HepG2 (cell line): ENCODE measurements at regions of chr12 and their contacts with region 1.

Region 1: DNA sequence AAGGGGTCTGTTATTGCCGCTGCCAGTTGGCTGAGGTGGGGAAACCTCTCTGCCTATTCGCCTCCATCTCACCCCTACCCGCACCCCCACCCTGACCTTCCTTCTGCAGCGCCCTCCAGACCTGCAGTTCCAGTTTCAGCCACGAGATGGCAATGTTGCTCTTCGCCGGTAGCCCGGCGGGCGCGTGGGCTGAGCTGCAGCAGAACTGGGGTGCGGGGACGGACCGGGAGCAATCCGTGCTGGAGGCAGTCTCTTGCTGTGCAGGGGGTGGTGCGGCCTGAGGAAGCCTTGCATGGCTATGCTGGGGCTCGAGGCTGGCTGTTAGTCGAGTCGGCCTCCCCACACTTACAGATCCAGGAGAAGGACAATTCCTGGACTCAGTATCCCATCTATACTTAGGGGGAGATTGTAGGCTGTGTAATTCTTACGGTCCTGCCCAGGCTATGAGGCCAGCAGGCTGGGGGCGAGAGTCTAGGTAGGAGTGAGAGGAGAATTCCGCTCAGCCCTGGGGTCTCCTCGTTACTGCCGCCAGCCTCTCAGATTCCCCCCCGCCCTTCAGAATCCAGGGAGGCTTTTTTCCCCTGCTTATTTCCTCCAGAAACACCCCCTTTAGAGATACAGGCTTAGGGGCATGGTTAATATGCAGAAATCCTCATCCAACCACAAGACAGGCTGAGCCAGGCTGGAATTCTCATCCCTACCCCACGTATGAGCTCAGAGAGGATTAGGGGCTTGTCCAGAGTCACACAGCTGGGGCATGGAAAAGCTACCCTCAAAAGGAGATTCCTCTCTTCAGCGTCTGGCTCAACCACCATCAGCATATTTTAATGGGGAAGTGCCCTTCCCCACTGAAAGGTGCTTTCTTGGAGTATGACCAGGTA is 118.2 kb downstream of the AACS start:
- DNase-seq: peak; percentile 39
- ATAC-seq: peak; percentile 82
- H3K4me3 ChIP-seq: no peak overlapping the region
- H3K27ac ChIP-seq: no peak overlapping the region
- H3K4me1 ChIP-seq: no peaks in the 10 kb centered on the region
- H3K27me3 ChIP-seq: peaks cover 10 to 42% of the 10 kb centered on the region in 2 experiments
- CTCF ChIP-seq: peak; percentile 99
- EP300 ChIP-seq: no peak
- POLR2A ChIP-seq: no peak
- RAD21 ChIP-seq: peak; percentile 93

Region 2: GRCh38 chr12:125203145-125203765 is 19.8 kb after region 1 on chr12:
- CTCF ChIA-PET with region 1: interaction called, 7 read pairs
- POLR2A ChIA-PET with region 1: interaction called, 3 read pairs
- in situ Hi-C with region 1: no loop called
- intact Hi-C with region 1: loop called (anchors 1 kb)
- DNase-seq: peak; percentile 9
- ATAC-seq: peak; percentile 72
- H3K4me3 ChIP-seq: no peak overlapping the region
- H3K27ac ChIP-seq: no peak overlapping the region
- H3K4me1 ChIP-seq: no peaks in the 10 kb centered on the region
- H3K27me3 ChIP-seq: peaks cover 1 to 21% of the 10 kb centered on the region in 2 experiments; a peak in 4 of 5 replicates
- CTCF ChIP-seq: peak; percentile 49
- EP300 ChIP-seq: no peak
- POLR2A ChIP-seq: no peak
- RAD21 ChIP-seq: no peak

Region 3: DNA sequence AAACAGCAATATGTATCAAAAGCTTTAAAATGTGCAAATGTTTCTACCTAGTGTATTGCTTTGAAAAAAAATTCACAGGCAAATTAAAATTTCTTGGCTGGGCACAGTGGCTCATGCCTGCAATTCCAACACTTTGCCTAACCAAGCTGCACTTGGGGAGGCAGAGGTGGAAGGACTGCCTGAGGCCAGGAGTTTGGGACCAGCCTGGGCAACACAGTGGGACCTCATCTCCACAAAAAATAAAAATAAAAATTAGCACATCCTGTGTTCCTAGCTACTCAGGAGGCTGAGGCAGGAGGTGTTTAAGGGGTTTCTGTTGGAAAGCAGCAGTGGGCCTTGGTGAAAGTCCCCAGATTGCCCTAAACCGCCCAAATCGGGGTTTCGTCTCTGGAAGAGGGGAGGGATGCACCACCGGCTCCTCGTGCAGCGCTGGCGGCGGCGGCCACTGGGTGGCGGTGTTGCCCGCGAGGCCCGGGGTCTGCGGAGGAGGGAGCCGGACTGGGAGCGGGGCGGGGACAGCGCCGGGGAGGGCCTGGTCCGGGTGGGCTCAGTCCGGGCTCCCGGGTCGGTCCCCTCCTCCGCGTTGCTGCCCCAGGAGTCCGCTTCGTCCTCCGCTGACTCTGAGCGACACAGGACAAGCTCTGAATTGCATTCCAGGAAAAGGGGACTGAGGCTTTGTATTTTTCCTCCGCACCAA is 147.4 kb after region 1 on chr12:
- CTCF ChIA-PET with region 1: no interaction called
- POLR2A ChIA-PET with region 1: no interaction called
- in situ Hi-C with region 1: no loop called
- intact Hi-C with region 1: loop called (anchors 1 kb)
- DNase-seq: peak; percentile 5
- ATAC-seq: peak; percentile 99
- H3K4me3 ChIP-seq: peak overlapping the region in 2 of 3 experiments; percentile 10 to 63; a peak in 2 of 6 replicates
- H3K27ac ChIP-seq: no peak overlapping the region
- H3K4me1 ChIP-seq: no peaks in the 10 kb centered on the region
- H3K27me3 ChIP-seq: peaks cover 2 to 11% of the 10 kb centered on the region in 2 experiments; a peak in 2 of 5 replicates
- CTCF ChIP-seq: peak; percentile 93
- EP300 ChIP-seq: no peak
- POLR2A ChIP-seq: no peak
- RAD21 ChIP-seq: peak; percentile 92

Region 4: DNA sequence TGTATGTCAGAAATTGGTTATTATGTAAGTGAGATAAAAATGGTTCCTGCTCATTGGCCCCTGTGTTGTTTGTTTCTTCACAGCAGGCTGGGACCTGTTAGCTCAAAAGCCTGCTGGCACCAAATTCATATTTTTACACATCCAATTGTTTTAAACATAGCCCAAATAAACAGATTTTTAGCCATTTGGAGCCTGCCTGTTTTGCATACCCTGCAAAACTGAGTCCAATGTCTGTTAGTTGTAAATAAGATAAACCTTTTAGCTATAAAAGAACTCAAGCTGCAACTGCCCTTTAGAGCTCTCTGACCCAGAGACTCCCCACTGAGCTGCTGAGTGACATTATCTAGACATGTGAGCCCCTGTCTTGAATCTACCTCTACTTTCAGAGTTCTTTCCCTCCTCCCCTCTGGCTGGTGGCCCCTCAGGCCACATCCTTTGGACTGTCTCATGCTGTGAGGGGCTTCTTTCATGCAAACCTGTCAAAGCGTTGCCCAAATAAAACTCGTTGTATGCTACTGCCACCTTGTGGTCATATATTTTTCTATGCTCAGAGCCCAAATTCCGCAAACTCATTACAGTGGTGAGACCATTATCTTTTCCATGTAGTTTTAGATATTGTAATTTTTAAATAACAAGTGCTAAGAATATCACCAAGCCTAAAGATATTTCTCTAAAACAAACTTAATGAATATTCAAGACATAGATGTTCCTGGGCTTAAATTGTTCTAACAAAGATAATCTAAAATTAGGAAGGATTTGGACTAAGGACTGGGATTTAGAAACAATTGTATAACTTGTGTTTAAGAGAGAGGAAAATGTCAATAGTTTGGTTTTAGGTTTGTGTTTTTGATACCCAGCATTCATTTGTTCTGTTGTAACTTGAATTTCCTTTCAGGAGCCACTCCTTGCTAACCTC is 219.7 kb after region 1 on chr12:
- CTCF ChIA-PET with region 1: interaction called, 16 read pairs
- POLR2A ChIA-PET with region 1: no interaction called
- in situ Hi-C with region 1: loop called (anchors 5 kb)
- intact Hi-C with region 1: loop called (anchors 1 kb)
- DNase-seq: peak; percentile 34
- ATAC-seq: peak; percentile 65
- H3K4me3 ChIP-seq: no peak overlapping the region
- H3K27ac ChIP-seq: no peak overlapping the region
- H3K4me1 ChIP-seq: no peaks in the 10 kb centered on the region
- H3K27me3 ChIP-seq: no peaks in the 10 kb centered on the region
- CTCF ChIP-seq: peak; percentile 80
- EP300 ChIP-seq: no peak
- POLR2A ChIP-seq: no peak
- RAD21 ChIP-seq: peak; percentile 85

Region 5: GRCh38 chr12:125683748-125684381 is 500.4 kb after region 1 on chr12:
- CTCF ChIA-PET with region 1: no interaction called
- POLR2A ChIA-PET with region 1: no interaction called
- in situ Hi-C with region 1: no loop called
- intact Hi-C with region 1: loop called (anchors 10 kb)
- DNase-seq: peak; percentile 31
- ATAC-seq: peak; percentile 98
- H3K4me3 ChIP-seq: no peak overlapping the region
- H3K27ac ChIP-seq: no peak overlapping the region
- H3K4me1 ChIP-seq: no peaks in the 10 kb centered on the region
- H3K27me3 ChIP-seq: no peaks in the 10 kb centered on the region
- CTCF ChIP-seq: peak; percentile 88
- EP300 ChIP-seq: no peak
- POLR2A ChIP-seq: no peak
- RAD21 ChIP-seq: peak; percentile 56; the same call in 1 of the 2 replicates